ENCODE measurements at regions of chr2 and their contacts with region 1.

Region 1: GRCh38 chr2:217510771-217511291 is 492.0 kb downstream of the TNS1 start:
- DNase-seq: no peak
- H3K4me3 ChIP-seq: no peak overlapping the region
- CTCF ChIP-seq: peak; percentile 78

Region 2: DNA sequence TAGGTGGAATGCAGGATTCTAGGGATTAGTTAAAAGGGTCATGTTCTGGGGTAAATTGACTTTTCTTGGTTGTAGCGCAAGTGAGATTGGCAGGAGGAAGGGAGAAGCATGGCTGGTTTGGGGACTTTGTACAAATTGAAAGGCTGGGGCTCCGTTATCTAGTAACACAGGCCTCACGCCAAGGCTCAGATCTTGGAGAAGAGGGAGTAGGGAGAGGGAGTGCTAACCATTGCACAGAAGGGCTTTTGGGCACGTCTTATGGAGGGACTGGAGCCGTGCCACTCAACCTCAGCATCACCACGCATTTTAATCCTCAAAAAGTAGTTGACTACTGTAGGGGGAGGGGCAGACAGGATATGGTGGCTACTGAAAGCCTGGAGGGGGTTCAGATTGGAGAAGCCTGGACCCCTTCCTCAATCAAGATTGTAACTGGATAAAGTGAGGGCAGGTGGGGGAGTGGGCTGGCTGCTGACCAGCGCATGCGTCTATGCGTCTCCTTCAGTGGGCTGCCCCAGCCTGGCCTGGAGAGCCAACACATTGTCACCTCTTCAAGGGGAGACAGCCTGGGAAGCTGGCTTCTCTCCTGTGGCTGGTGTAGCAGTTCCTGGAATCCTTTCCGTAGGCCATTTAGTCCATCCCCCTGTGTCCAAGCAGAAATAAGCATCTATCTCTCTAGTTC is 829.7 kb before region 1 on chr2:
- CTCF ChIA-PET with region 1: interaction called, 26 read pairs
- POLR2A ChIA-PET with region 1: interaction called, 4 read pairs
- DNase-seq: no peak
- H3K4me3 ChIP-seq: no peak overlapping the region
- CTCF ChIP-seq: no peak

Region 3: DNA sequence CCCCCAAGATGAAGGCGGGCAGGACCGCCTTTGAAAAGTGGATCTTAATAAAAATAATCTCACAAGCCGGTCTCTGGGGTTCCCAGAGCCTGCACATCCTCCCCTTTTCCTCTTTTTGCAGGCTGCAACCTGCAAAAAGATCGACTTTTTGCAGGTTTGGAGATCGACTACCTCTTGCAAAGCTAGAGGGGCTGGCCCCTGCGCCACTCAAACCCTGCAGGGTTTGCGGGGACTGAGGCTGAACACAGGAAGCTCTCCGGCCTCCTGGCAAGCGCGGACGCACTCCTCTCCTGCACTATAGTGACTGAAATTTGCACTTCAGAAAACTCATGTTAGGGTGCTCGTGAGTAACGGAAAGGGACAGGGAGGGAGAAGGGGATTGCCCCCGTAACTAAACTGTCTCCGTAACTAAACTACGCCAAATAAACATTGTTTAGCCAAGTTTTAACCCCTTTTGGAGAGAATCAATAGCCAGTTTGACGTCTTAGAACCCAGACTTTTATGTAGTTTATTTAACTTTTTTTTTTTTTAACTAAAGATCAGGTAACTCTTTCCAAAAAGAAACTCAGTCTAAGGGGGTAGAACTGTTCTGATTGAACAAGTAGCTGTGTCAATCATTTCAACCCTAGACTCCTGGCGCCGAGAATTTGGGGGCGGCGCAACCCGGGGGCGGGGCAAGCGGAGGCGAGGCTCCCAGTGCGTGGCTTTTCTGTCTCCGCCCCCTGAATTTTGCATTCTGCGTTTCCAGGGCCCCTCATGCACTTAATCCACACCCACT is 818.0 kb before region 1 on chr2:
- CTCF ChIA-PET with region 1: interaction called, 22 read pairs
- POLR2A ChIA-PET with region 1: no interaction called
- DNase-seq: no peak
- H3K4me3 ChIP-seq: peak overlapping the region; percentile 55
- CTCF ChIP-seq: no peak

Region 4: DNA sequence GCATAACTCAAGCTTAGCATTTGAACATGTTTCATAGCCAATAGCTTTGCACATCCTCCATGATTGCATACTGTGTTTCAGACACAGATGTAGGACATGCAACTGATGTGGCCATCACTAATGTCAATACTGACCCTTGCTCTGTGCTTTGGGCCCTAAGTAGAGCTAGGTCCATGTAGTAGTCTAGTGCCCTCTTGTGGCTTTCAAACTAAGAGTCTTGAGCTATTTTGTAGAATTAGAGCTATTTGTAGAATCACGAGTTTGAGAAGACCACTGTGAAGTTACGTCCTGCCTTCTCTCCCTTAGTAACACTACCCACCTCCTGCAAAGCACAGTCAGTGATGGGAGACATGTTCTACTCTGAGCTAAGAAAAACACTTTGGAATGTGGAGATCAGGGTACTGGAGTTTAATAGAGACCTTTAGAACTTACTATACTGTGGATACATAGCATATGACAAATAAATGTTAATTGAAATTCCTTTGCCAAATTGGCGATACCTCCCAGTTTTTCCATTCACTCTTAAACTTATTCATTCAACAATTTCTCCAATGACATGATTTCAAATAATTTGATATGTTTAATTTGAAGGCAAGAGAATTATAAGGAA is 344.5 kb before region 1 on chr2:
- CTCF ChIA-PET with region 1: interaction called, 21 read pairs
- POLR2A ChIA-PET with region 1: no interaction called
- DNase-seq: no peak
- H3K4me3 ChIP-seq: no peak overlapping the region
- CTCF ChIP-seq: peak; percentile 40

Region 5: DNA sequence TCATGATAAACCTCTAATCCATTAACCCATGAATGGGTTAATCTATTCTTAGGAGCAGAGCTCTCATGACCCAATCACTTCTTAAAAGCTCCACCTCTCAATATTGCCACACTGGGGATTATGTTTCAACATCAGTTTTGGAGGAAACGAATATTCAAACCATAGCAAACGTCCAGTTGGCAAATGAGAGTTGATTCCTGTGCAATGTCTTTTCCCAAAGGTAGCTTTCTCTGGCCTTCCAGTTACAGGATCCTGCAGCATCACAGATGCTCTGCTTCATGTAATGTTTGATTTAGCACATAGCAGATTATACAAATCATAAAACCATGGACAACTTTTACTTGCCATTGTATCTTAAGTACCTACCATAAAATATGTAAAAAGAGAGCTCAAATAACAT is 11.0 kb after region 1 on chr2:
- CTCF ChIA-PET with region 1: interaction called, 14 read pairs
- POLR2A ChIA-PET with region 1: no interaction called
- DNase-seq: no peak
- H3K4me3 ChIP-seq: no peak overlapping the region
- CTCF ChIP-seq: no peak

Region 6: GRCh38 chr2:217858519-217859491 is 348.0 kb after region 1 on chr2:
- CTCF ChIA-PET with region 1: no interaction called
- POLR2A ChIA-PET with region 1: no interaction called
- DNase-seq: peak; percentile 96
- H3K4me3 ChIP-seq: no peak overlapping the region
- CTCF ChIP-seq: no peak

Measured in AG04449 (cell line).